Activated CD4-positive, alpha-beta T cell treated with anti-CD3 and anti-CD28 coated beads, Interleukin-2, amount 10 ng/mL, durations not matched to agents 24 days and 14 days (primary cell): ENCODE measurements at regions of chr5 and their contacts with region 1.

Region 1: GRCh38 chr5:53095931-53096525 is 13.5 kb downstream of the MOCS2 start:
- DNase-seq: peak; percentile 92
- H3K4me3 Mint-ChIP-seq: no peak overlapping the region
- H3K27ac Mint-ChIP-seq: no peak overlapping the region
- H3K4me1 Mint-ChIP-seq: peaks cover 22% of the 10 kb centered on the region
- H3K27me3 Mint-ChIP-seq: no peaks in the 10 kb centered on the region

Region 2: DNA sequence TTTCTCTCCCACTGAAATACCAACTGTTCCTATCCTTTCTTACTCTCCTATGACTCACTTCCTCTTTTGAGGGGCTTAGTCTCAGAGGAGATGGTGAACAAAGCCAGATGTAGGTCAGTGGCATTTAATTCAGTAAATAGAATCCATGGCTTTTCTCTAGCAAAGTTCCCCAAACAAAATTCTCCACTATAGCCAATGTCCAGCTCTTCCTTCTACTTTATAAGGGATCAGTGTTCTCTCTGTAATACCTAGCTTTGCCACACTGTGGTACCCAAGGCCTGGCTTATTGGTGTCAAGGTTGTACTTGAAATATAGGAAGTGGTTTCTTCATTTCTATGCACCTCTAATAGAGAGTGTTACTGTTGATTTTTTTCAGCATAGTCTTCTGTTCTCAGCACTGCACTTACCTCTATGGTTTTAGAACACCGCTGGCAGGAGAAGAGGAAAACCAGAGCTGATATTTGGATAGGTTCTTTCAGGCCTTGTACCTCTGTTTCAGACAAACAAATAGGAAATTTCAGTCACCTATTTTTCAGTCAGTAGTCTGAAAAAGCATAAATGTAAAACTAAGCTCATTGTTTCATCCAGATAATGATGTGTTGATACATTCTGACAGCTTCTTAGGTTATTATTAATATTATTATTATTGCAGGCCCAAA is 147.5 kb before region 1 on chr5:
- intact Hi-C with region 1: loop called (anchors 1 kb)
- DNase-seq: peak; percentile 92
- H3K4me3 Mint-ChIP-seq: no peak overlapping the region
- H3K27ac Mint-ChIP-seq: peak overlapping the region; percentile 46
- H3K4me1 Mint-ChIP-seq: peaks cover 19% of the 10 kb centered on the region
- H3K27me3 Mint-ChIP-seq: peaks cover 1% of the 10 kb centered on the region

Region 3: GRCh38 chr5:53219174-53219573 is 123.1 kb after region 1 on chr5:
- intact Hi-C with region 1: no loop called
- DNase-seq: no peak
- H3K4me3 Mint-ChIP-seq: no peak overlapping the region
- H3K27ac Mint-ChIP-seq: no peak overlapping the region
- H3K4me1 Mint-ChIP-seq: no peaks in the 10 kb centered on the region
- H3K27me3 Mint-ChIP-seq: peaks cover 2% of the 10 kb centered on the region